Activated CD4-positive, alpha-beta memory T cell treated with anti-CD3 and anti-CD28 coated beads, Interleukin-2, amount 10 ng/mL, durations not matched to agents 7 days and 5 days (primary cell): ENCODE measurements at regions of chr5 and their contacts with region 1.

Region 1: DNA sequence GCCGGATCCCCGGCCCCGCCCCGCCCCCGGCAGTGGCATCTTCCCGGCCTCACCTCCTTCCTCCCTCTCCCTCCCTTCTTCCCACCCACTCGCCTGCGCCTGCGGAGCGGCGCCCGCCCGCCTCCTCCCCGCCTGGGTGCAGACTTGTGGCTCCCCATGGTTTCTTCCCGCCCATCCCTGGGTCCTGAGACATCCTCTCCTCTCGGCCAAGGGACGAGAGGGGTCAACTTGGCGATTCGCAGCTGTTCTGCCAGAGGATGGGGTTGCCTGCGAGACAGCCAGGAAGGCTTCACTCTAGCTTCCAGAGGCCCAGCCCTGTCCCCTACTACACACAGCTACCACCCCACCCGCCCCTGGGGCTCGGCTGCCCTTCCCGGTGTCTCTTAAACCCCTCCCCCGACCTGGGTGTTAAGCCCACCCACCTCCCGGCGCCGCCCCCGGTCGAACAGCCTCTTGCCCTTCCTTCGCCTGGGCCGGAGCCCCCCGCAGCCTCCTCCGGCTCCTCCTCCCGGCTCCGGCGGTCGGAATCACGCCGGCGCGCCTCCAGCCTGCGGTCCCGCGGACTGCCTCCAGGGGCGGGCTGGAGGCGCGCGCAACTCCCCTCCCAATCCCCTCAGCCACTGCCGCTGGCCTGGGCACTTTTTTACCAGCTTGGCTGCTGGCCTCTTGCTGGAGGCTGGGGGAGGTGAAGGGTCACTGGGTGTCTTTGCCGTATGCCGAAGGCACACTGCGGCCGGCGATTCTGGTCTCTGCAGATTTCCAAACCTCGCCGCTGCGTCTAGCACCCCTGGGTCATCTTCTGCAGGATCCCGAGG is 1.9 kb downstream of the JADE2 start:
- DNase-seq: peak; percentile 74
- H3K4me3 Mint-ChIP-seq: peak overlapping the region; percentile 93
- H3K27ac Mint-ChIP-seq: peak overlapping the region; percentile 89
- H3K4me1 Mint-ChIP-seq: peaks cover 37% of the 10 kb centered on the region
- H3K27me3 Mint-ChIP-seq: peaks cover 5% of the 10 kb centered on the region

Region 2: DNA sequence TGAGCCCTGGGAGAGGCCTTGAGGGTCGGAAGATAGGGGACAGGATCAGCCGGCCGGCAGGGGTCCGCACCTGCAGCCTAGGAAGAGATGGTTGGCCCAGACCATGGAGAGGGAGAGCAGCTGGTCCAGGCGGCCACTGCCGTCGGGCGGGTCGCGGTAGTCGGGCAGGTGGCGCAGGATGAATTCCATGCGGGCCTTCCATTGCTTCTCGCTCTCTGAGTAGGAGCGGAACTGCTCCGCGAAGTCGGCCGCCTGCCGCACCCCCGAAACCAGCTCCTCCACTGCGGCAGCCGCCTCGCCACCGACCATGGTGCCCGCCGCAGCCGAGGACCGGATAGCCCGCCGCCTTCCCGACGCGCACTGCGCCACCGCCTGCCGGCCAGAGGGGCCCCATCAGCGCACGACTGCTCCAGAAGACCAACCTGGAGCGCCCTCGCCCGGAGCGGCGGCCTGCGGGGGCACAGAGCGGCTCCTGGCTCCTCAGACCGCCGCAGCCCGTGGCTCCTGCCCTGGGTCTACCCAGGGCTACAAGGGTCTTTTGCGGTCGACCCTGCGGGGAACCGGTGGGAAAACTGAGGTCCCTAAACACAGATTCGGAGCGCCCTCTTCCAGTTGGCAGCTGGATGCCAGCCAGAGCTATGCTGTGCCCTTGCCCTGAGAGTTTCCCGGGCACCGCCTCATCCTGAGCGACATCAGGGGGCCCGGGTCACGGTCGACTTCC is 115.6 kb before region 1 on chr5 and contains the start of gene CDKN2AIPNL:
- CTCF ChIA-PET with region 1: interaction called, 30 read pairs
- POLR2A ChIA-PET with region 1: interaction called, 70 read pairs
- DNase-seq: peak; percentile 91
- H3K4me3 Mint-ChIP-seq: peak within 1 kb of the TSS; percentile 96
- H3K27ac Mint-ChIP-seq: peak within 1 kb of the TSS; percentile 84
- H3K4me1 Mint-ChIP-seq: peaks cover 36% of the 10 kb centered on the region
- H3K27me3 Mint-ChIP-seq: no peaks in the 10 kb centered on the region
- total RNA-seq, gene CDKN2AIPNL: 23.4 to 23.5 TPM

Region 3: DNA sequence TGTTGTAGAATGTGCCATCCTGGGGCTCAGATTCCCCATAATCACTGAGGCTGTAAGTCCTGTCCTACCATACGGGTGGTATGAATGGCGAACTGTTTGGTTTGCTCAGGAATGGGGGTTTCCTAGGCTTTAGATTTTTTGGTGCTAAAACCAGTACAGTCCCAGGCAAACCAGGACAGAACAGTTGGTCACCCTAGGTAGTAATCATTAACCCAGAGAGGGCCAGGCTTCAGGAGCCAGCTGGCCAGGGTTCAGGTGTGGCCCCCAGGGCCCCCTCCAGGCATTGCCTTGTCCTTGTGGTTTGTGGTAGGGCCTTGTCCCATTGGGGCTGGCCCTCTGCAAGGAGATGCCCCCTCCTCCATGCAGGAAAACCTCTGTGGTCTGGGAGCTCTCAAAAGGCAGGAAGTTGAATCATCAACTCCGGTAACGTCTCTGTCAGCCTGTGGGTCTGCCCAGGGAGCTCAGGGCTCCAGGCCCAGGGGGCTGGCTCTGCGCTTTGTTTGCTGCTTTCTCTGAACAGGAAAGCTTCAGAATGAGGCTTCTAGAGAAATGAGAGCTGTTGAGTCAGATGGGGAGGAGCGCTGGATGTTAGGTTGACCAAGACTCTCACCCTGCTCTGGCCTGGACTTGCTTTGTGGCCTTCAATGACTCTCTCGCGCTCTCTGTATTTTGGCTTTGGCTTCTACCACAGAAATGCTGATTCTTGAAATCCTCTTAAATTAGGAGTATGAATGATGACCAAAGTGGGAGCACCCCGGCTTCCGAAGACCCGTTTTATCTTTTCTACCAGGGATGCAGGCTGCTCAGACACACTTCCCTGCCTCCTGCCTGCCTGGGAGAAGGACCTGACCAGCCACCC is 24.0 kb before region 1 on chr5:
- CTCF ChIA-PET with region 1: interaction called, 6 read pairs
- POLR2A ChIA-PET with region 1: interaction called, 82 read pairs
- DNase-seq: peak; percentile 85
- H3K4me3 Mint-ChIP-seq: peak overlapping the region; percentile 43
- H3K27ac Mint-ChIP-seq: peak overlapping the region; percentile 96
- H3K4me1 Mint-ChIP-seq: peaks cover 50% of the 10 kb centered on the region
- H3K27me3 Mint-ChIP-seq: no peaks in the 10 kb centered on the region

Region 4: DNA sequence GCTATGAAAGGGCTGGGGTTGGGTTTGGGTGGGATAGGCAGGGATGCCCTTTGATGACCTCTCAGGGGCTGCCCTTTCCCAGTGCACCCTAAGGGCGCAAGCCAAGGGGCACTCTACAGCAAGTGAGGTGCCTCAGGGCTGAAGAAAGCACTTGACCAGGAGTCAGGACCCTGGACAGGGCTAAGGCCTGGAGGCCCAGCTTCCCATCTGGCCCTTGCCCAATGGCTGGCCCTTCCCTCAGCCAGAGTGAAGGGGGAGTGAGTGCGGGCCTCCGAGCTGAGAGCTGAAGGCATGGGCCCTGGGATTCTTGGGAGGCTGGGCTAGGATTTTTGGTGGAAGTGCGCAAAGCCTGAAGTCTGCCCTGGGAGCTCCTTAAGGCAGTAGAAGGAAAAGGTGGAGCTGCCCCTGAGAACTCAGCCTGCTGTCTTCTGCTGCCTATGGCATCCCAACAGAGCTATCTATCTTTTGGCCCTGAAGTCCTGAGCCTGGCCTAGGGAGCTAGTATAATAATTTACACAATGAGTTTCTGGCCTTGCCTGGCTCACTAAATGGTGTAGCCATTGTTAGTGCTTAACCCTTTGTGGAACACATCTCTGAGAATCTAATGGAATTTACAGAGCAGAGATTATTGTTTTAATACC is 14.5 kb after region 1 on chr5:
- CTCF ChIA-PET with region 1: interaction called, 45 read pairs
- POLR2A ChIA-PET with region 1: interaction called, 45 read pairs
- DNase-seq: no peak
- H3K4me3 Mint-ChIP-seq: no peak overlapping the region
- H3K27ac Mint-ChIP-seq: no peak overlapping the region
- H3K4me1 Mint-ChIP-seq: peaks cover 43% of the 10 kb centered on the region
- H3K27me3 Mint-ChIP-seq: no peaks in the 10 kb centered on the region

Region 5: GRCh38 chr5:134577796-134578363 is 50.5 kb after region 1 on chr5:
- CTCF ChIA-PET with region 1: interaction called, 11 read pairs
- POLR2A ChIA-PET with region 1: interaction called, 8 read pairs
- DNase-seq: peak; percentile 78
- H3K4me3 Mint-ChIP-seq: no peak overlapping the region
- H3K27ac Mint-ChIP-seq: no peak overlapping the region
- H3K4me1 Mint-ChIP-seq: no peaks in the 10 kb centered on the region
- H3K27me3 Mint-ChIP-seq: no peaks in the 10 kb centered on the region

Region 6: GRCh38 chr5:134626369-134627014 is 99.1 kb after region 1 on chr5:
- CTCF ChIA-PET with region 1: no interaction called
- POLR2A ChIA-PET with region 1: no interaction called
- DNase-seq: no peak
- H3K4me3 Mint-ChIP-seq: no peak overlapping the region
- H3K27ac Mint-ChIP-seq: peak overlapping the region; percentile 27
- H3K4me1 Mint-ChIP-seq: peaks cover 25% of the 10 kb centered on the region
- H3K27me3 Mint-ChIP-seq: no peaks in the 10 kb centered on the region